Left ventricle myocardium superior (tissue), 1 donor: ENCODE measurements at regions of chr6 and their contacts with region 1.

Region 1: DNA sequence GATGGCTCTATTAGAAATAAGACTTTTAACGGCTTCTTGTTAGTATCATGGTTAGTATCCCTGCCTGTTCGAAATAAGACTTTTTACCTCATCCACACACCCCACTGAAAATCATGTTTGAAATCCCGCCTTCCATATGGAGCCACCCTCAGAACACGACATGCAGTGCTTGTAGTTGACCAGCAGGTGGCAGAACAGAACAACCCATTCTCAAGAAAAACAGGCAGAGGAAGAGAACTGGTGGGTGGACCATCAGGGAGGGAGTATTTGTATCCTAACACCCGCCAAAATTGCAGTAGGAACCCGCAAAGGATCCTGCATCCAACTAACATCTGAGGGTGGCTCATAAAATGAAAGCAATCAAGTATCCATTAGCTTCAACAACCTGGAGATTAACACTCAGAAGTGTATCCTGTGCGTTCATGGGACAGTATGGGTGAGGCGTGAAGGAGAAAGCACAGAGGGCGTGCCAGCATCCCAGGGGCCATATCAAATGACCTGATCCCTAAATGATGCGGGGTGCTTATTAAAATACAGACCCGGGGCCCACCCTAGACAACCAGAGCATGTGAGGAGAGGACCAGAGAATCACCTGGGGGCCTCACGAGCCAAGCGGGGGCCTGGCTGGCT is 89.6 kb upstream of the NHSL1 start:
- DNase-seq: peak; percentile 45
- ATAC-seq: peak; percentile 67

Region 2: GRCh38 chr6:138428944-138429598 is 159.8 kb before region 1 on chr6:
- intact Hi-C with region 1: loop called (anchors 5 kb)
- DNase-seq: no peak
- ATAC-seq: peak; percentile 48

Region 3: DNA sequence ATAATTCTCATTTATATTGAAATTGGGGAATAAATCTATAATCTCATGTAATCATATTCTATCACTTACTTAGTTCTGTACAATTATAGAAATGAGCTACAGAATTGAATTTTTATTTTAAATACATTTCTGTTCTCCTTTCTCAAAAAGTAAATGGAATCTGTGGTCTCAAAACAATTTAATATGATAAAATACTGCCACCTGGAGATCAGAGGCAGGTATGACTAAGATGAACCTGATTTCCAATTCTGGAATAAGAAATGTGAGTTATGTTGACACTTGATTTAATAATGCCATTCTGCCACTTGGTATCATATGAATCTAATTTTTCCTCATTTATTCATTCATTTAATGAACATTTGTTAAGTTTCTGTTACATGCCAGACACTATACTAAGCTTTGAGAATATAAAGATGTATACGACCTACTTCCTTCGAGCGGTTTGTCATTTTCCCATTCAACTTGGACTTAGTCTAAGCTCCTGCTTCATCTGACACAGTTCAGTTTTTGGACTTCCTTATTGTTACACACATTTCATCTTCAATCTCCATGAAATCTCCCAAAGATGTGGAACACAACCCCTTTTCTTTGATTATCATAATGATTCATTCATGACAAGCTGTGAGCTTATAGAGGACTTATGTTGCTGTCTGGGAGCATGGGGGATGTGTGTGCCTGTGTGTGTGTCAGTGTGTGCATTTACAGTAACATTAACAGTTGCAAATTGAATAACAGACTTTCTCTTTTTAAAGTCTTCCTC is 177.2 kb after region 1 on chr6:
- intact Hi-C with region 1: loop called (anchors 5 kb)
- DNase-seq: no peak
- ATAC-seq: no peak

Region 4: GRCh38 chr6:139625998-139626975 is 1037.4 kb after region 1 on chr6:
- intact Hi-C with region 1: no loop called
- DNase-seq: no peak
- ATAC-seq: peak; percentile 21